Mammary epithelial cell (primary cell): ENCODE measurements at regions of chr6 and their contacts with region 1.

Region 1: GRCh38 chr6:131923356-131923755 is 27.8 kb downstream of the CCN2 start:
- DNase-seq: peak; percentile 53
- H3K4me3 ChIP-seq: no peak overlapping the region
- H3K27ac ChIP-seq: no peak overlapping the region
- H3K4me1 ChIP-seq: peaks cover 9% of the 10 kb centered on the region
- H3K27me3 ChIP-seq: no peaks in the 10 kb centered on the region
- CTCF ChIP-seq: peak; percentile 69 to 75

Region 2: DNA sequence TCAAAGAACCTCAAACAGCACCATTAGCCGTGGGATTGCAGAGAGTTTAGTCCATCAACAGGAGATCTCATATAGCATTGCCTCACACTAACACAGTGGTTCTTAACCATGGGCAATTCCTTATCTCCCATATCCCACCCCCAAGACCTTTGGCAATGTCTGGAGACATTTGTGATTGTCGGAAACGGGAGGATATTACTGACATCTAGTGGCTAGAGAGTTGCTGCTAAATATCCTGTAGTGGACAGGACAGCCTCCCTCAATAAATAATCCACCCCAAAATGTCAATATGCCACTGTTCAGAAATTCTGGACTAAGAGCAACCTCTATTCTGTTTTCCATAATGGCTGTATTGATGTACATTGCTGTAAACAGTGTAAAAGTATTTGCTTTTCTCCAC is 237.9 kb after region 1 on chr6:
- CTCF ChIA-PET with region 1: no interaction called
- dilution Hi-C with region 1: no loop called
- in situ Hi-C with region 1: no loop called
- intact Hi-C with region 1: loop called (anchors 1 kb)
- DNase-seq: peak; percentile 40
- H3K4me3 ChIP-seq: no peak overlapping the region
- H3K27ac ChIP-seq: no peak overlapping the region
- H3K4me1 ChIP-seq: no peaks in the 10 kb centered on the region
- H3K27me3 ChIP-seq: no peaks in the 10 kb centered on the region
- CTCF ChIP-seq: peak; percentile 46 to 73

Region 3: GRCh38 chr6:132259070-132259469 is 335.7 kb after region 1 on chr6:
- CTCF ChIA-PET with region 1: interaction called, 3 read pairs
- dilution Hi-C with region 1: no loop called
- in situ Hi-C with region 1: no loop called
- intact Hi-C with region 1: loop called (anchors 1 kb)
- DNase-seq: peak; percentile 12
- H3K4me3 ChIP-seq: no peak overlapping the region
- H3K27ac ChIP-seq: no peak overlapping the region
- H3K4me1 ChIP-seq: peaks cover 4% of the 10 kb centered on the region
- H3K27me3 ChIP-seq: no peaks in the 10 kb centered on the region
- CTCF ChIP-seq: peak; percentile 41 to 60

Region 4: DNA sequence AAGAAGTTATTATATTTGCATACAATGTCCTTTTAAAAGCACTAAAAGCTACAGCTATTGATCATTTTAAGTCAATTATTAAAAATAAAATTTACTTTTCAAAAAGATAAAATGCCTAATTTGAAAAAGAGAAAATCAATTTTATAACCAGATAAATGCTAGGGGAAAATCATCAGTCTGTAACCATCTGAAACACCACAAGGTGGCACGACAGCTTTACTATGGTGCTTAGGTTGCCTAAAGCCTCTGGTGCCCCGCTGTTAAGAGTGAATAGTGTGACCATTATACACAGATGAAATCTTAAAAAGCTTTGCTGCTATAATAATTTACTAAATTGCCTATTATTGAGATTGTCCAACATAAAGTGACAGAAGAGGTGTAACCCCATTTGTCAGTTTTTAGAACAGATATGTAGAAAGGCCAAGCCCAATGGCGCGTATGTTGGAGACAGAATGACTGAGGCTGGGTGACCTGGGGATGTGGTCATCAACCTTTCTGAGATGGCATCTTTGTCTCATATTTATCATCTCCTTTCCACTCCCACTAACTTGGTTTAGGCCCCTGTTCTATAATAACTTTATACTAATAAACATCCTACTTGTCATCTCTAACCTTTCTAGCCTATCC is 377.1 kb after region 1 on chr6:
- CTCF ChIA-PET with region 1: no interaction called
- dilution Hi-C with region 1: no loop called
- in situ Hi-C with region 1: no loop called
- intact Hi-C with region 1: loop called (anchors 1 kb)
- DNase-seq: peak; percentile 39
- H3K4me3 ChIP-seq: no peak overlapping the region
- H3K27ac ChIP-seq: no peak overlapping the region
- H3K4me1 ChIP-seq: no peaks in the 10 kb centered on the region
- H3K27me3 ChIP-seq: no peaks in the 10 kb centered on the region
- CTCF ChIP-seq: peak; percentile 55 to 72

Region 5: DNA sequence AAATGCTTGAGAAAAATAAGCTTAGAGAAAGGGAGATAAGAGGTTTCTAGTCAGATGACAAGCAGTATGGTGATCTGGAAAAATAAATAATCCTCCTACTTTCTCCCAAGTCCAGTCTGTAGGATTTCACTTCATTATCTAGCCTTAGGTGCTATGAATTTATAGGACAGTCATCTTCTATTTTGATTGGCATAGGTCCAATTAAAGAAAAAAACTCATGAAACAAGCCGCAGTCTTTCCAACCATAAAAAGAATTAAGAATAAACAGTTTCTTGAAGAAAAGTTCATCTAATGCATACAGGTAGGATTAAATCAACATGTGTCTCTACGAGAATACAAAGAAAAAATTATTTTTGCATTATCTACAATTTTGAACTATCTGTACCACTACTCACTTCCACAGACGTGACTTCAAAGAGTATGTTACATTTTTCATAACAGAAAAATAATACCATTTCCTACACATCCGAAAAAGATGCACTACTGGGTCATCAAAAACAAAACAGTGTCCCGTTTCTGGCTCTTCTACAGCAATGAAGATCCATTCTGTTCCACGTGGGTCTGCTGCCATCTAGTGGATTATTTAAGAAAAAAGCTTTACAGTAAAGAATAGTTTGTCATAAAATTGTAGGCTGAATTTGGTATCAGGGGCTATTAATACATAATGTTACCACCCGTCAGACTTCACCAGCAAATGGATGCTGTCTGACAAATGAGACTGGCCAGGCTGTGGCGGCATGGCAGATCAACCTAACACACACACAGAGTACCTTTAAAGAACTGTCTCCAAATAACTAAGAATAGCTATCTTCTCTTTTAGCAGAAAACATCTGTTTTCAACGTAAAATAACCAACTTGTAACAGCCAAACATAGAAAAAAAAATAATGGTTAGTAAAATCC is 560.7 kb after region 1 on chr6:
- CTCF ChIA-PET with region 1: no interaction called
- dilution Hi-C with region 1: no loop called
- in situ Hi-C with region 1: loop called (anchors 10 to 25 kb)
- intact Hi-C with region 1: loop called (anchors 10 kb)
- DNase-seq: peak; percentile 39
- H3K4me3 ChIP-seq: no peak overlapping the region
- H3K27ac ChIP-seq: no peak overlapping the region
- H3K4me1 ChIP-seq: peaks cover 6% of the 10 kb centered on the region
- H3K27me3 ChIP-seq: no peaks in the 10 kb centered on the region
- CTCF ChIP-seq: peak; percentile 63 to 68